AG04449 (cell line): ENCODE measurements at regions of chr10 and their contacts with region 1.

Region 1: GRCh38 chr10:34666008-34666705 is 148.9 kb downstream of the PARD3 start:
- DNase-seq: peak; percentile 70
- H3K4me3 ChIP-seq: no peak overlapping the region
- CTCF ChIP-seq: peak; percentile 50

Region 2: GRCh38 chr10:34290412-34291081 is 375.6 kb before region 1 on chr10:
- CTCF ChIA-PET with region 1: no interaction called
- POLR2A ChIA-PET with region 1: no interaction called
- DNase-seq: peak; percentile 41
- H3K4me3 ChIP-seq: no peak overlapping the region
- CTCF ChIP-seq: no peak

Region 3: GRCh38 chr10:34985823-34986222 is 319.7 kb after region 1 on chr10:
- CTCF ChIA-PET with region 1: interaction called, 14 read pairs
- POLR2A ChIA-PET with region 1: no interaction called
- DNase-seq: no peak
- H3K4me3 ChIP-seq: no peak overlapping the region
- CTCF ChIP-seq: peak; percentile 42

Region 4: DNA sequence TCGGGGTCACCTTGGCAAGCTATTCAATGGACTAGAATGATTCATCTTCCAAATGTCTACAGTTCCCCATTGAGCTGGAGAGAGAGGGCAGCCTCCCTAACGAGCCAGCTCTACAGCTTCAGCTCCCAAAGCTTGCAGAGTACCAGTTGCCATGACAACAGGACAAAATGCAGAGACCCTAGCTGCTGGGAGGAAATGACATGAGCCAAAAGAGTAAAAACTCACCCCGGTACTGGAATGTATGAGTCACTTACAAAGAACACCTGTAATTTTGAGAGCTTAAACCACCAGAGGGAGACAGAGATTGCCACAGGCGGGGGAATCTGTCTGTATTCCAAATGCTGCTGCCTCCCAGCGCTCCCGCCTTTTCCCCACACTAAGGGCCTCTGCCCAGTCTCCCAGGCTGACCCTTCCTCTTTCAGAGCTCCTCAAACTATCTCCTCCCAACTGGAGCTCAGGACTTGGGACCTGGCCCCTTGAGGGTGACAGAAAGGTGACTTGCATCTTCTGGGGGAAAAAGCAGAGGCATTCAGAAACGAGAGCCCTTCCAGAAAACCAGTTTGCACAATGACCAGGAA is 328.5 kb after region 1 on chr10:
- CTCF ChIA-PET with region 1: interaction called, 30 read pairs
- POLR2A ChIA-PET with region 1: no interaction called
- DNase-seq: no peak
- H3K4me3 ChIP-seq: no peak overlapping the region
- CTCF ChIP-seq: peak; percentile 34